Uterus (tissue), 4 donors: ENCODE measurements at regions of chr10 and their contacts with region 1.

Region 1: GRCh38 chr10:30542001-30542894 is 87.3 kb downstream of the LYZL2 start:
- DNase-seq: no peak
- H3K4me3 ChIP-seq: no peak overlapping the region
- H3K27ac ChIP-seq: no peak overlapping the region
- H3K4me1 ChIP-seq: no peaks in the 10 kb centered on the region
- H3K27me3 ChIP-seq: no peaks in the 10 kb centered on the region
- CTCF ChIP-seq: no peak
- POLR2A ChIP-seq: no peak

Region 2: DNA sequence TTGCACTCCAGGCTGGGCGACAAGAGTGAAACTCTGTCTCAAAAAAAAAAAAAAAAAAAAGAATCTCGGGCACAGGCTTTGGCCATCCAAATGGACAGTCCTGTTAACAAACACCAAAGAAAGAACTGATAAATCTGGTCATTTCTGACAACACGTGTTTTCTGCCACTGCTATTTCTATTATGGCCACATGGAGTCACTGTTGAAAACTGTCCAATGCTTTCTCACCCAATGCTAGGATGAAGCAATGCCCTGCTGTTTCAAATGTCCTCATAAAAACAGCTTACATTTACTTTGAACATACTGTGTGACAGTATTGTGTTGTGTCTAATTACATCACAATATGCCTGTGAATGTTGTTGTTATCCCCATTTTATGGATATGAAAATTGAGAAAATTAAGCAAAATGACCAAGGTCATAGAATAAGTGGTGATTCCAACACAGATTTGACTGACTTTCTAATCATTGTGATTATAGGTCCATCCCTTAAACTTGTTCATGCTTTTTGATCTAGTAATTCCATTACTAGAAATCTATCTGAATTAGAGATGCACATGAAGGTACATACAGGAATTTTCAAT is 128.2 kb before region 1 on chr10:
- intact Hi-C with region 1: loop called (anchors 5 kb)
- DNase-seq: no peak
- H3K4me3 ChIP-seq: no peak overlapping the region
- H3K27ac ChIP-seq: no peak overlapping the region
- H3K4me1 ChIP-seq: no peaks in the 10 kb centered on the region
- H3K27me3 ChIP-seq: no peaks in the 10 kb centered on the region
- CTCF ChIP-seq: peak; percentile 75 to 95 (median 87)
- POLR2A ChIP-seq: no peak

Region 3: DNA sequence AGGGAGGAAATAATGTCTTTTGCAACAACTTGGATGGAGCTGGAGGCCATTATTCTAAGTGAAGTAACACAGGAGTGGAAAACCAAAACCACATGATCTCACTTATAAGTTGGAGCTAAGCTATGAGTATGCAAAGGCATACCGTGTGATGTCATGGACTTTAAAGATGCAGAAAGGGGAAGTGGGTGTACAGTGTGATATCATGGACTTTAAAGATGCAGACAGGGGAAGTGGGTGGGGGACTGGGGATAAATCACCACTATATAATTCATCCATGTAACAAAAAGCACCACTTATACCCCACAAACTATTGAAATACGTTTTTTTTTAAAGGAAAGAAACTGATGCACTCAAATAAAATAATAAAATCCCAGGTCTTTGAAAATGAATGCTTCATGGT is 57.8 kb after region 1 on chr10:
- intact Hi-C with region 1: no loop called
- DNase-seq: no peak
- H3K4me3 ChIP-seq: no peak overlapping the region
- H3K27ac ChIP-seq: no peak overlapping the region
- H3K4me1 ChIP-seq: no peaks in the 10 kb centered on the region
- H3K27me3 ChIP-seq: no peaks in the 10 kb centered on the region
- CTCF ChIP-seq: no peak
- POLR2A ChIP-seq: no peak

Region 4: GRCh38 chr10:30812018-30812851 is 270.0 kb after region 1 on chr10:
- intact Hi-C with region 1: no loop called
- DNase-seq: peak; percentile 83 to 93
- H3K4me3 ChIP-seq: no peak overlapping the region
- H3K27ac ChIP-seq: peak overlapping the region; percentile 84 to 92
- H3K4me1 ChIP-seq: peaks cover 21 to 35% of the 10 kb centered on the region in 2 donors
- H3K27me3 ChIP-seq: no peaks in the 10 kb centered on the region
- CTCF ChIP-seq: no peak
- POLR2A ChIP-seq: peak in 1 of 2 donors; percentile 13

Region 5: GRCh38 chr10:31982111-31982510 is 1439.9 kb after region 1 on chr10:
- intact Hi-C with region 1: no loop called
- DNase-seq: no peak
- H3K4me3 ChIP-seq: no peak overlapping the region
- H3K27ac ChIP-seq: no peak overlapping the region
- H3K4me1 ChIP-seq: no peaks in the 10 kb centered on the region
- H3K27me3 ChIP-seq: no peaks in the 10 kb centered on the region
- CTCF ChIP-seq: no peak
- POLR2A ChIP-seq: no peak